WTC11 (cell line): ENCODE measurements at regions of chr11 and their contacts with region 1.

Region 1: DNA sequence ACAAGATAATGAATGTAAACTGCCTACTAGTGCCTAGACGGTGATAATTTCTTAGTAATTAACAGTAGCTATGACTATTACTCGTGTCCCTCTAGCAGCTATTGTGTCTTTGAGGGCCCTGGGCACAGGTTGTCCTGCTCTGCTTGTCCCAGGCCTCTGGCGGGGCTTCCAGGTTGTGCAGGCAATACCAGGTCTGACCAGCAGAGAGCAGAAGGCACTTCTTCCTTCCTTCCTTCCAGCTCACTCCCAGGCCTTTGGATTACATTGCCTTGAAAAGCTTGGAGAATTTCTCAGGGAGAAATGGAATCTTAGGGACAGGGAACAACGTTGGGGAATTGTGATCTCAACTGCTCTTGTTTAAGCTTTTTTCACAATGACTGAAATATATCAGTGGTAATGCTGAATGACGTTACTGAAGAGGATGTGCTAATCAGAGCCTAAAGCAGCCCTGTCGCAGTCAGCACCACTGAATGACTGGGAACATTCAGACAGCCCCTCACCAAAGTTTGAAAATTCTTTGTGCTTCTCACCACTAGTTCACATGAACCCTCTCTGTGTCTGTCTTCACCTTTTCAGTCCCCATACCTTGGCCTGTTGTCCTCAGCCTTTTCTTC is 8.4 kb upstream of the CCKBR start:
- DNase-seq: peak; percentile 89
- ATAC-seq: peak; percentile 99
- H3K4me3 Mint-ChIP-seq: no peak overlapping the region
- H3K27ac Mint-ChIP-seq: no peak overlapping the region
- H3K4me1 Mint-ChIP-seq: peaks cover 8% of the 10 kb centered on the region
- H3K27me3 Mint-ChIP-seq: peaks cover 4% of the 10 kb centered on the region
- CTCF ChIP-seq: peak; percentile 80

Region 2: GRCh38 chr11:6234387-6235107 is 16.7 kb before region 1 on chr11 and contains the start of gene FHIP1B:
- CTCF ChIA-PET with region 1: interaction called, 24 read pairs
- POLR2A ChIA-PET with region 1: no interaction called
- DNase-seq: peak; percentile 100
- ATAC-seq: peak; percentile 97
- H3K4me3 Mint-ChIP-seq: peak within 1 kb of the TSS; percentile 100
- H3K27ac Mint-ChIP-seq: peak within 1 kb of the TSS; percentile 96
- H3K4me1 Mint-ChIP-seq: peaks cover 13% of the 10 kb centered on the region
- H3K27me3 Mint-ChIP-seq: no peaks in the 10 kb centered on the region
- CTCF ChIP-seq: no peak
- total RNA-seq, gene FHIP1B: 22.2 to 24.8 TPM (median 23.6 TPM) in 3 replicates

Region 3: GRCh38 chr11:6285019-6285418 is 33.8 kb after region 1 on chr11:
- CTCF ChIA-PET with region 1: interaction called, 39 read pairs
- POLR2A ChIA-PET with region 1: no interaction called
- DNase-seq: no peak
- ATAC-seq: no peak
- H3K4me3 Mint-ChIP-seq: no peak overlapping the region
- H3K27ac Mint-ChIP-seq: no peak overlapping the region
- H3K4me1 Mint-ChIP-seq: peaks cover 31% of the 10 kb centered on the region
- H3K27me3 Mint-ChIP-seq: peaks cover 98% of the 10 kb centered on the region
- CTCF ChIP-seq: no peak

Region 4: GRCh38 chr11:6307876-6308275 is 56.6 kb after region 1 on chr11:
- CTCF ChIA-PET with region 1: interaction called, 18 read pairs
- POLR2A ChIA-PET with region 1: no interaction called
- DNase-seq: no peak
- ATAC-seq: peak; percentile 22
- H3K4me3 Mint-ChIP-seq: no peak overlapping the region
- H3K27ac Mint-ChIP-seq: no peak overlapping the region
- H3K4me1 Mint-ChIP-seq: peaks cover 33% of the 10 kb centered on the region
- H3K27me3 Mint-ChIP-seq: no peaks in the 10 kb centered on the region
- CTCF ChIP-seq: no peak

Region 5: GRCh38 chr11:6321961-6322362 is 70.7 kb after region 1 on chr11:
- CTCF ChIA-PET with region 1: interaction called, 102 read pairs
- POLR2A ChIA-PET with region 1: no interaction called
- DNase-seq: no peak
- ATAC-seq: no peak
- H3K4me3 Mint-ChIP-seq: peak overlapping the region; percentile 41
- H3K27ac Mint-ChIP-seq: peak overlapping the region; percentile 96
- H3K4me1 Mint-ChIP-seq: peaks cover 71% of the 10 kb centered on the region
- H3K27me3 Mint-ChIP-seq: peaks cover 16% of the 10 kb centered on the region
- CTCF ChIP-seq: no peak